B cell (primary cell): ENCODE measurements at regions of chr2 and their contacts with region 1.

Region 1: GRCh38 chr2:101012706-101013181 is 10.7 kb downstream of the RPL31 start:
- DNase-seq: peak; percentile 59
- ATAC-seq: no peak
- H3K4me3 ChIP-seq: no peak overlapping the region
- H3K4me3 Mint-ChIP-seq: no peak overlapping the region
- H3K27ac ChIP-seq: no peak overlapping the region
- H3K27ac Mint-ChIP-seq: no peak overlapping the region
- H3K4me1 ChIP-seq: no peaks in the 10 kb centered on the region
- H3K4me1 Mint-ChIP-seq: peaks cover 3% of the 10 kb centered on the region
- H3K27me3 ChIP-seq: no peaks in the 10 kb centered on the region
- H3K27me3 Mint-ChIP-seq: no peaks in the 10 kb centered on the region
- CTCF ChIP-seq: peak; percentile 96

Region 2: GRCh38 chr2:100660851-100661584 is 351.7 kb before region 1 on chr2:
- CTCF ChIA-PET with region 1: no interaction called
- POLR2A ChIA-PET with region 1: no interaction called
- intact Hi-C with region 1: no loop called
- DNase-seq: no peak
- ATAC-seq: no peak
- H3K4me3 ChIP-seq: no peak overlapping the region
- H3K4me3 Mint-ChIP-seq: no peak overlapping the region
- H3K27ac ChIP-seq: no peak overlapping the region
- H3K27ac Mint-ChIP-seq: no peak overlapping the region
- H3K4me1 ChIP-seq: no peaks in the 10 kb centered on the region
- H3K4me1 Mint-ChIP-seq: no peaks in the 10 kb centered on the region
- H3K27me3 ChIP-seq: no peaks in the 10 kb centered on the region
- H3K27me3 Mint-ChIP-seq: peaks cover 41% of the 10 kb centered on the region
- CTCF ChIP-seq: no peak

Region 3: GRCh38 chr2:101001691-101002561 is 10.8 kb before region 1 on chr2 and contains the start of gene RPL31:
- CTCF ChIA-PET with region 1: interaction called, 23 read pairs
- POLR2A ChIA-PET with region 1: interaction called, 3 read pairs
- intact Hi-C with region 1: no loop called
- DNase-seq: peak; percentile 95
- ATAC-seq: peak; percentile 97
- H3K4me3 ChIP-seq: peak within 1 kb of the TSS; percentile 80 to 99 (median 92)
- H3K4me3 Mint-ChIP-seq: peak within 1 kb of the TSS; percentile 88
- H3K27ac ChIP-seq: peak within 1 kb of the TSS; percentile 84 to 91
- H3K27ac Mint-ChIP-seq: peak within 1 kb of the TSS; percentile 96
- H3K4me1 ChIP-seq: peaks cover 15 to 21% of the 10 kb centered on the region in 2 donors
- H3K4me1 Mint-ChIP-seq: peaks cover 40% of the 10 kb centered on the region
- H3K27me3 ChIP-seq: no peaks in the 10 kb centered on the region
- H3K27me3 Mint-ChIP-seq: no peaks in the 10 kb centered on the region
- CTCF ChIP-seq: no peak
- total RNA-seq, gene RPL31: 1,595 and 1,767 TPM in 2 replicates

Region 4: GRCh38 chr2:101036562-101037457 is 24.1 kb after region 1 on chr2:
- CTCF ChIA-PET with region 1: interaction called, 11 read pairs
- POLR2A ChIA-PET with region 1: no interaction called
- intact Hi-C with region 1: no loop called
- DNase-seq: no peak
- ATAC-seq: no peak
- H3K4me3 ChIP-seq: no peak overlapping the region
- H3K4me3 Mint-ChIP-seq: no peak overlapping the region
- H3K27ac ChIP-seq: no peak overlapping the region
- H3K27ac Mint-ChIP-seq: no peak overlapping the region
- H3K4me1 ChIP-seq: no peaks in the 10 kb centered on the region
- H3K4me1 Mint-ChIP-seq: peaks cover 2% of the 10 kb centered on the region
- H3K27me3 ChIP-seq: no peaks in the 10 kb centered on the region
- H3K27me3 Mint-ChIP-seq: peaks cover 4% of the 10 kb centered on the region
- CTCF ChIP-seq: peak; percentile 27

Region 5: GRCh38 chr2:101047075-101047766 is 34.5 kb after region 1 on chr2:
- CTCF ChIA-PET with region 1: no interaction called
- POLR2A ChIA-PET with region 1: no interaction called
- intact Hi-C with region 1: no loop called
- DNase-seq: no peak
- ATAC-seq: no peak
- H3K4me3 ChIP-seq: no peak overlapping the region
- H3K4me3 Mint-ChIP-seq: no peak overlapping the region
- H3K27ac ChIP-seq: no peak overlapping the region
- H3K27ac Mint-ChIP-seq: no peak overlapping the region
- H3K4me1 ChIP-seq: peaks cover 0 to 10% of the 10 kb centered on the region in 2 donors
- H3K4me1 Mint-ChIP-seq: peaks cover 10% of the 10 kb centered on the region
- H3K27me3 ChIP-seq: no peaks in the 10 kb centered on the region
- H3K27me3 Mint-ChIP-seq: no peaks in the 10 kb centered on the region
- CTCF ChIP-seq: no peak

Region 6: DNA sequence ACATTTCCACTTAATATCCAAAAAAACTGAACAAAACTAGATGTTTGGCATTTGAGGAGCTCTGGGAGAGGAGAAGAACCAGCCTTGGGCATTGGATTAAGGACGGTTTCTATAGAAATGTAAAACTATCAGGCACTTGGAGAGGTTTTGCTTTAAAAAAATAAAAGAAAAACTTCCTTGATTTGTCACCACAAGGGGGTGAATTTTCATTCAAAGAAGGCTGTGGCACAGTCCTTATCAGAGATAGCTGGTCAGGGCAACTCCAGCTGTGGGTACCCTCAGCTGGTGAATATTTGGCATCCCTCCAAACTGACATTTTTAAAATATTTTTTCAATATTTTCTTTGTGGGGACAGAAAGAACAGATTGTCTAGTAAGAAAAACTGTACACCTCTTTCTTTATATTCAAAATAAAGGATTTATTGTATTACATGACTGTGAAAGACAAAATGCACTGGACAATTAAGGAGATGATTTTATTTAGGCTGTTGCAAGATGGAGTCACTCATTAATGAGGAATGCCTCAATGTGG is 184.5 kb after region 1 on chr2:
- CTCF ChIA-PET with region 1: interaction called, 213 read pairs
- POLR2A ChIA-PET with region 1: no interaction called
- intact Hi-C with region 1: no loop called
- DNase-seq: no peak
- ATAC-seq: no peak
- H3K4me3 ChIP-seq: no peak overlapping the region
- H3K4me3 Mint-ChIP-seq: no peak overlapping the region
- H3K27ac ChIP-seq: no peak overlapping the region
- H3K27ac Mint-ChIP-seq: no peak overlapping the region
- H3K4me1 ChIP-seq: no peaks in the 10 kb centered on the region
- H3K4me1 Mint-ChIP-seq: no peaks in the 10 kb centered on the region
- H3K27me3 ChIP-seq: no peaks in the 10 kb centered on the region
- H3K27me3 Mint-ChIP-seq: peaks cover 7% of the 10 kb centered on the region
- CTCF ChIP-seq: peak; percentile 38

Region 7: DNA sequence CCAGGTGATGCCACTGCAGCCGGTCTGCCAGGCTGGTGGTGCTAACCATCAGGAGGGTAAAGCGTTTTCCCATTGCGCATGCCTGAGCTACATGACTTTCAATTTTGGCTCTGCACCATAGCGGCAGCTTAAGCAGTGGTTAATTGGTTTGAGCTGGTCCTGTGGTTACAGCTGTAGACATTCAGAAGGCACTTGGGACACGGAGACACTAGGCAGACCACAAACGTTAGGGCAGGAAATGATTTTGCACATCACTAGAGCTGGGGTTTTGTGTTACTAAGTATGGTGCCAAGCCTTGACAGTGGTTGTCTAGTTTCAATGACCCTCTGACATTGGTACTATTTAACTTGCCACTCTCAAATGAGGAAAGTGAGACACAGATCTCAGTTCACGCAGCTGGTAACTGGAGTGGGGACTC is 211.1 kb after region 1 on chr2:
- CTCF ChIA-PET with region 1: interaction called, 11 read pairs
- POLR2A ChIA-PET with region 1: no interaction called
- intact Hi-C with region 1: no loop called
- DNase-seq: peak; percentile 76
- ATAC-seq: peak; percentile 93
- H3K4me3 ChIP-seq: peak overlapping the region in 1 of 5 experiments; percentile 2
- H3K4me3 Mint-ChIP-seq: peak overlapping the region; percentile 53
- H3K27ac ChIP-seq: no peak overlapping the region
- H3K27ac Mint-ChIP-seq: peak overlapping the region; percentile 37
- H3K4me1 ChIP-seq: peaks cover 20% of the 10 kb centered on the region in 2 donors
- H3K4me1 Mint-ChIP-seq: peaks cover 18% of the 10 kb centered on the region
- H3K27me3 ChIP-seq: peaks cover 0 to 50% (median 29%) of the 10 kb centered on the region in 4 experiments
- H3K27me3 Mint-ChIP-seq: peaks cover 40% of the 10 kb centered on the region
- CTCF ChIP-seq: no peak

Region 8: DNA sequence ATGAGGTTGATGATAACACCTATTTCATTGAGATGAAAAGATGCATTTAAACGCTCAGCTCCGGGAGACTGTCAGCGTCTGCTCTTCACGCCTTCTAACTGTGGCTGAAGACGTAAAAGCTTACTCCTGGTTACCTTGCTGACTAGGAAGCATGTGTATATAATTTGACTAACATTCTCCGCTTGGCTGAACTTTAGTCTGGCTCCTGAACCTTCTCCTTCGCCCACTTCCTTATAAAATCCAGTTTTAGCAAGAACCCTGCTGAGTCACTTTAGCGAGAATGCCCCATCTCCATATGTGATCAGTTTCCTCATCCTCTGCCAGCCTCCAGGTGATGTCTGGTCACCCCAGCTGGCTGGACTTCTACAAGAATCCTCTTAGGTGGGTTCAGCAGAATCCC is 387.3 kb after region 1 on chr2:
- CTCF ChIA-PET with region 1: no interaction called
- POLR2A ChIA-PET with region 1: no interaction called
- intact Hi-C with region 1: loop called (anchors 10 kb)
- DNase-seq: peak; percentile 60
- ATAC-seq: peak; percentile 40
- H3K4me3 ChIP-seq: peak overlapping the region in 1 of 5 experiments; percentile 23
- H3K4me3 Mint-ChIP-seq: peak overlapping the region; percentile 78
- H3K27ac ChIP-seq: peak overlapping the region in 1 of 2 donors; percentile 50
- H3K27ac Mint-ChIP-seq: peak overlapping the region; percentile 89
- H3K4me1 ChIP-seq: peaks cover 53 to 62% of the 10 kb centered on the region in 2 donors
- H3K4me1 Mint-ChIP-seq: peaks cover 52% of the 10 kb centered on the region
- H3K27me3 ChIP-seq: no peaks in the 10 kb centered on the region
- H3K27me3 Mint-ChIP-seq: peaks cover 8% of the 10 kb centered on the region
- CTCF ChIP-seq: no peak